ENCODE measurements at regions of chr1 and their contacts with region 1.

Region 1: GRCh38 chr1:153532769-153533599 is 2.8 kb downstream of the S100A6 start:
- DNase-seq: peak; percentile 72
- ATAC-seq: peak; percentile 84
- H3K4me3 ChIP-seq: peak overlapping the region; percentile 39 to 64 (median 41)
- H3K27ac ChIP-seq: peak overlapping the region; percentile 33
- H3K4me1 ChIP-seq: peaks cover 59% of the 10 kb centered on the region
- H3K27me3 ChIP-seq: no peaks in the 10 kb centered on the region; a peak in 1 of 5 replicates
- CTCF ChIP-seq: peak; percentile 90
- EP300 ChIP-seq: no peak
- POLR2A ChIP-seq: no peak
- RAD21 ChIP-seq: peak; percentile 82

Region 2: GRCh38 chr1:153422450-153423068 is 110.4 kb before region 1 on chr1:
- CTCF ChIA-PET with region 1: no interaction called
- POLR2A ChIA-PET with region 1: no interaction called
- in situ Hi-C with region 1: no loop called
- intact Hi-C with region 1: no loop called
- DNase-seq: peak; percentile 34
- ATAC-seq: no peak
- H3K4me3 ChIP-seq: no peak overlapping the region
- H3K27ac ChIP-seq: no peak overlapping the region
- H3K4me1 ChIP-seq: no peaks in the 10 kb centered on the region
- H3K27me3 ChIP-seq: no peaks in the 10 kb centered on the region
- CTCF ChIP-seq: no peak
- EP300 ChIP-seq: no peak
- POLR2A ChIP-seq: no peak
- RAD21 ChIP-seq: no peak

Region 3: DNA sequence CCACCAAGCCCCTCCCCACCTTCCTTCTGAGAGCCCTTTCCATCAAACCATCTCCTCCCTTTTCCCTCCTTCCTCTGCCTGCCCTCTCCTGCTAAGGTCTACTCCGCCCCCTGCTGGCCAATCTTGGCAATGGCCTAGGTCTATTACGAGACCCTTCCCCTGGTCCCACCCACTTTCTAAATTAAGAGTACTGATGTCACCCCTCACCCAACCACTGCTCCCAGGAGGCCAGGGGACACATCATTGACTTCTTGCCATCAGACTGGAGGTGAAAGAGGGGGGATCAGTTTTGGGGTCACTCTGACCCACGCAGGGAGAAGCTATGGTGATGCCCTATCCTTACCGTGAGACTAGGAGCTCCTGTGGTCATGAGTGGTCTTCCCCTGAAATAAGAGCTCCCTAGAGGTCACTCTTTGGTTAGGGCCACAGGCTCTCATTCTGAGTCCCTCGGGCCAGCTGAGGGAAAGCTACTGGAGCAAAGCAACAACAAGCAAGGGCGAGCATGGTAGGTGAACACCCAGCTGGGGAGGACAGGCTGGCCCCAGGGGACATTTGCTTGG is 37.9 kb before region 1 on chr1:
- CTCF ChIA-PET with region 1: no interaction called
- POLR2A ChIA-PET with region 1: no interaction called
- in situ Hi-C with region 1: no loop called
- intact Hi-C with region 1: no loop called
- DNase-seq: peak; percentile 54
- ATAC-seq: peak; percentile 90
- H3K4me3 ChIP-seq: no peak overlapping the region
- H3K27ac ChIP-seq: no peak overlapping the region
- H3K4me1 ChIP-seq: no peaks in the 10 kb centered on the region
- H3K27me3 ChIP-seq: peaks cover 3 to 5% of the 10 kb centered on the region in 2 experiments; a peak in 2 of 5 replicates
- CTCF ChIP-seq: peak; percentile 92
- EP300 ChIP-seq: no peak
- POLR2A ChIP-seq: no peak
- RAD21 ChIP-seq: peak; percentile 58; the same call in 1 of the 2 replicates

Region 4: DNA sequence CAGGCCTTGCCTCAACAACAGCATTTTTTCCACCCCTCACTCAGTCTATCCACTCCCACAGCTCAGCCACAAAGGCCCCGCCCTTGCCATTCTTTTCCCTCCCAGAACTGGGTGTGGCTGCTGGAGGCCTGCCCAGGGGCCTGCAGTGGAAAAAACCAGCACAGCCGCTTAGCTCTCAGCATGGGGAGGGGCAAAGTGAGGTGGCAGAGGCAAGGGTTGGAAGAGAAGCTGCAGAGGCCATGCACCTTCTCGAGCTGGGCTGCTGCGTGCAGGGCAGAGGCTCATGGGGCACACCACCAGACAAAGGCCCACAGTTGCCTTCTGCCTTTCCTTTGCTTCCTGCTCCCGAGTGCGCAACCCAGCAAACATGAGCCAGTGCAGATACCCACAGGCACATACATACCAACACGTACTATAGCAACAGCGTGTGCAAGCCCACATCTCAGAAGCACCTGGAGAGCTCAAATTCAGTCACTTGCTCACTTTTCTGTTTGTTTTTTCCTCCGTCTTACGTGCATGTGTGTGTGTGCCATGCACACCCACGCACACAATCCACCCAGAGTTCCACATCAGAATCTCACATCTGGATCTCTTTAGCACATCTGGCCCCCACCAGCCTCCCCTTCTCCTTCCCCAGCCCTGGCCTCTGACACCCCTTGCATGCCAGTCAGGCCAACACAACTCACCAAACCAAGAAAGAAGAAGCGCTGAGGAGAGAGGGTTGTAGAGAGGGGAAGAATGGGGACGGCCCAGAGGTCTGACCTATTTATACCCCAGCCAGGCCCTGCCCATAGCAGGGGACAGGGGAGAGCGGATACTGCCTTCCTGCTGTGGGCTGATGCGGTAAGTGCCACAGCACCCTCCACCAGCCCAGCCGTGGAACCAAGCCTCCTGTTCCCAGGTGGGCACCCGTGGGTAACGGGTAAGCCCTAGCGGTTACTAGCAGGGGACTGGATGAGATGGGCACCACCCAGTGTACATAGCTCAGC is 12.4 kb after region 1 on chr1 and contains the start of gene S100A4:
- CTCF ChIA-PET with region 1: no interaction called
- POLR2A ChIA-PET with region 1: interaction called, 27 read pairs
- in situ Hi-C with region 1: no loop called
- intact Hi-C with region 1: no loop called
- DNase-seq: peak; percentile 93
- ATAC-seq: peak; percentile 85
- H3K4me3 ChIP-seq: peak within 1 kb of the TSS in 2 of 3 experiments; percentile 32 to 62; a peak in 4 of 6 replicates
- H3K27ac ChIP-seq: peak within 1 kb of the TSS; percentile 39
- H3K4me1 ChIP-seq: peaks cover 98% of the 10 kb centered on the region
- H3K27me3 ChIP-seq: peaks cover 1 to 11% of the 10 kb centered on the region in 2 experiments; a peak in 3 of 5 replicates
- CTCF ChIP-seq: no peak
- EP300 ChIP-seq: peak in 1 of 2 experiments; percentile 87; a peak in 2 of 4 replicates
- POLR2A ChIP-seq: peak; percentile 51 to 82
- RAD21 ChIP-seq: no peak
- total RNA-seq, gene S100A4: 20.2 and 24.5 TPM in 2 replicates

Region 5: GRCh38 chr1:153556348-153556747 is 23.4 kb after region 1 on chr1:
- CTCF ChIA-PET with region 1: no interaction called
- POLR2A ChIA-PET with region 1: no interaction called
- in situ Hi-C with region 1: no loop called
- intact Hi-C with region 1: no loop called
- DNase-seq: no peak
- ATAC-seq: no peak
- H3K4me3 ChIP-seq: no peak overlapping the region
- H3K27ac ChIP-seq: no peak overlapping the region
- H3K4me1 ChIP-seq: peaks cover 18% of the 10 kb centered on the region
- H3K27me3 ChIP-seq: peaks cover 1 to 16% of the 10 kb centered on the region in 2 experiments; a peak in 2 of 5 replicates
- CTCF ChIP-seq: no peak
- EP300 ChIP-seq: no peak
- POLR2A ChIP-seq: no peak
- RAD21 ChIP-seq: no peak